Psoas muscle (tissue), 8 donors: ENCODE measurements at regions of chr2 and their contacts with region 1.

Region 1: GRCh38 chr2:213251618-213252017 is 32.6 kb upstream of the SPAG16 start:
- DNase-seq: no peak
- ATAC-seq: peak; percentile 54 to 89 (median 74)
- H3K4me3 ChIP-seq: peak overlapping the region; percentile 50
- H3K27ac ChIP-seq: no peak overlapping the region
- H3K4me1 ChIP-seq: no peaks in the 10 kb centered on the region
- H3K27me3 ChIP-seq: no peaks in the 10 kb centered on the region
- CTCF ChIP-seq: peak; percentile 76

Region 2: DNA sequence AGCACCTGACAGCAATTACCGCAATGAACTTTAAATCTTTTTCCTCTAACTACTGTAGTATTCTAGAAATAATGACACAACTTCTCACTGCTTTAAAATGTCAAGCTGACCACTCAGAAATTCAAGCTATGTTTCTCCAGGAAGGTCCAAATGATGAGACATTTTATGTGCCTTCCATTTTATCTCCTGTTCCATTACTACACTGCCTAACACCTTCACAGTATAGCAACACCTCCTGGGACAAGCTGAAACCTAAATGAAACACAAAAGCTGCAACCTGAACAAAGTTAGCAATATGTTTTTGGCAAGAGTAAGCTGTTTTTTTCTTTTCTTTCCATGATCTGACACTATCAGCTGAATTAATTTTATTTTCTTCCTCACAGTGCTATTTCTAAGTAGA is 182.1 kb before region 1 on chr2:
- intact Hi-C with region 1: no loop called
- DNase-seq: no peak
- ATAC-seq: no peak
- H3K4me3 ChIP-seq: no peak overlapping the region
- H3K27ac ChIP-seq: no peak overlapping the region
- H3K4me1 ChIP-seq: peaks cover 47% of the 10 kb centered on the region
- H3K27me3 ChIP-seq: no peaks in the 10 kb centered on the region
- CTCF ChIP-seq: no peak

Region 3: GRCh38 chr2:213104092-213104902 is 147.3 kb before region 1 on chr2:
- intact Hi-C with region 1: no loop called
- DNase-seq: no peak
- ATAC-seq: peak; percentile 64 to 71 (median 66)
- H3K4me3 ChIP-seq: peak overlapping the region; percentile 56
- H3K27ac ChIP-seq: peak overlapping the region; percentile 62
- H3K4me1 ChIP-seq: peaks cover 70% of the 10 kb centered on the region
- H3K27me3 ChIP-seq: no peaks in the 10 kb centered on the region
- CTCF ChIP-seq: no peak

Region 4: GRCh38 chr2:213137064-213137463 is 114.6 kb before region 1 on chr2:
- intact Hi-C with region 1: no loop called
- DNase-seq: no peak
- ATAC-seq: no peak
- H3K4me3 ChIP-seq: no peak overlapping the region
- H3K27ac ChIP-seq: no peak overlapping the region
- H3K4me1 ChIP-seq: peaks cover 13% of the 10 kb centered on the region
- H3K27me3 ChIP-seq: no peaks in the 10 kb centered on the region
- CTCF ChIP-seq: no peak

Region 5: DNA sequence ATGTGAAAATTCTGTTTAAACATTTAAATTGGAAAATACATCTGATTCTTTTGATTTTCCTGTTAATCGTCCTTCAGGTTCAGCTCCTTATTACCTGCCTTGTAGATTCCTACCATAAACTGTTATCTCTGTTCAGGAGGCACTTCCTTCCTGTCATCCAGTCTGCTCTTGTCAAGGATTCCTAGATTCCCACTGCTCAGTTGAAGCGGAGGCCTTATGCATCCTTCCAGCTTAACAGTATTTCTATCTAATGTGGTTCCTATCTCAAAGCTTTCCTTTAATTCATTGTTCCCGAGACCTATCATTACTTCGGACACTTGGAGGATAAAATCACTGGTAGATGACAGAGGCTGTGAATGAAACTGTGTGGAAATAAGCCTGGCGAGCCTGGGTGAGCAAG is 44.7 kb after region 1 on chr2:
- intact Hi-C with region 1: no loop called
- DNase-seq: no peak
- ATAC-seq: no peak
- H3K4me3 ChIP-seq: no peak overlapping the region
- H3K27ac ChIP-seq: no peak overlapping the region
- H3K4me1 ChIP-seq: no peaks in the 10 kb centered on the region
- H3K27me3 ChIP-seq: no peaks in the 10 kb centered on the region
- CTCF ChIP-seq: no peak

Region 6: GRCh38 chr2:213490087-213490486 is 238.5 kb after region 1 on chr2:
- intact Hi-C with region 1: loop called in 1 of 2 experiments (anchors 10 kb)
- DNase-seq: no peak
- ATAC-seq: no peak
- H3K4me3 ChIP-seq: no peak overlapping the region
- H3K27ac ChIP-seq: no peak overlapping the region
- H3K4me1 ChIP-seq: no peaks in the 10 kb centered on the region
- H3K27me3 ChIP-seq: no peaks in the 10 kb centered on the region
- CTCF ChIP-seq: no peak

Region 7: GRCh38 chr2:213934560-213934959 is 682.9 kb after region 1 on chr2:
- intact Hi-C with region 1: loop called in 1 of 2 experiments (anchors 5 kb)
- DNase-seq: no peak
- ATAC-seq: no peak
- H3K4me3 ChIP-seq: no peak overlapping the region
- H3K27ac ChIP-seq: no peak overlapping the region
- H3K4me1 ChIP-seq: no peaks in the 10 kb centered on the region
- H3K27me3 ChIP-seq: no peaks in the 10 kb centered on the region
- CTCF ChIP-seq: no peak